HEK293 (cell line): ENCODE measurements at regions of chr1 and their contacts with region 1.

Region 1: GRCh38 chr1:207963427-207964194 is 52.7 kb upstream of the CD34 start:
- H3K4me3 ChIP-seq: peak overlapping the region; percentile 37
- H3K27ac ChIP-seq: no peak overlapping the region; the same call in 1 of the 2 replicates
- H3K4me1 ChIP-seq: no peaks in the 10 kb centered on the region
- CTCF ChIP-seq: peak; percentile 95

Region 2: DNA sequence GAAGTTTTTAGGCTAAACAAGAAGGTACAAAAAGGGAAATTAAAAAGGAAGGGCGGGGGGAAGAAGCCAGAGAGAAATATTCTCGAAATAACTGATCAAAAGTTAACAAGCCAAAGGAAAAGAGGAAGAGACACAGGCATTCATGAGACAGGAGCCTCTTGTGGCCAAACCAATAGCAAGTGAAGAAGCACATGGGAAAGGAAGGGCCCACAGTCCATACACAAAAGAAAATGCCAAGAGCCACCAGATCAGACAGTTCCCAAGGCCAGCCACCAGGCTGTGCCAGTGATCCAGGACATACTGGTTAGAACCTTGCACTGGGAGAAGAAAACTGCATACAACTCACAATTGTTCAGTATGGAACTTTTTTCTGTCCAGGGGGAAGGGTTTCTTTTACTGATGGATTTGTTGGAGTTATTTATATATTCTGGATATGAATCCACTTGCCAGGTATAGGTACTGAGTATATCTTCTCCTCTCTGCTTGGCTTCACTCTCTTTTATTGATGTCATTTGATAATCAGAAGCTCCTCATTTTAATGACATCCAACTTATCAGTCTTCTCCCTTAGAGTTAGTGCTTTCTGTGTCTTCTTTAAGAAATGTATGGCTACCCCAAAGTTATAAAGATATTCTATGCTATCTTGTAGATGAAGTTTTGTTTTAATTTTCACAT is 135.0 kb before region 1 on chr1:
- CTCF ChIA-PET with region 1: interaction called, 15 read pairs
- POLR2A ChIA-PET with region 1: no interaction called
- H3K4me3 ChIP-seq: no peak overlapping the region
- H3K27ac ChIP-seq: no peak overlapping the region
- H3K4me1 ChIP-seq: no peaks in the 10 kb centered on the region
- CTCF ChIP-seq: peak; percentile 60

Region 3: DNA sequence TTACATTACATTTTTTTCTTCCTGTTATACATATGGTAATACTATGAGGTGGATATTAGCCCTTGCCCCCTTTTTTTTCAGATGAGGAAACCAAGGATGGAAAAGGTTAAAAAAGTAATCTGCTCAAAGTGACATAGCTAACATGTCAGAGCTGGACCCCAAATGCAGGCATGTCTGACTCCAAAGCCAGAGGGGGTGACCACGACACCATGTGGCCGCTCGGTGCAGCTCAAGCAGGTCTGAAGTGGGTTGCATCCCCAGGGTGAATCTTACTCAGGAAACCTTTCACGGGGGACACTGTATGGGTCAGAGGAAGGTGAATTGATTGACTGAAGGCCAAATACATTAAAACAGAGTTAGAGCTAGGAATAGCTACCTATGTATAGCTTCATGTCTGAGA is 87.5 kb before region 1 on chr1:
- CTCF ChIA-PET with region 1: interaction called, 12 read pairs
- POLR2A ChIA-PET with region 1: interaction called, 3 read pairs
- H3K4me3 ChIP-seq: no peak overlapping the region
- H3K27ac ChIP-seq: no peak overlapping the region
- H3K4me1 ChIP-seq: no peaks in the 10 kb centered on the region
- CTCF ChIP-seq: no peak

Region 4: DNA sequence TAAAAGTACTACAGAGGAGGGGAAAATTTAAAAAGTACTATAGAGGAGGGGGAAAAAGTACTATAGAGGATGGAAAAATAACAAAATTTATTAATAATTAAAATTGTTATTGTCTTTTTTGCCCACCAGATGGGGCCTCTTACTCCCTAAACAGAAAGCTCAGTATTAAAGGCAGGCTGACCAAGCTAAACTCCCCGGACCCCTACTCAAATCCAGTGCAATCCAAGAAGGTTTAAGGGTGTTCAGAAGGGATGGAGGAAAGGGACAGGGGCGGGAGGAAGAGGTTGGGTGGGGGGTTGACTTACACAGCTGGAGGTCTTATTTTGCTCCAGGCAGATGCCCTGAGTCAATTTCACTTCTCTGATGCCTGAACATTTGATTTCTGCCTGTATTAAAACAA is 66.4 kb before region 1 on chr1:
- CTCF ChIA-PET with region 1: interaction called, 36 read pairs
- POLR2A ChIA-PET with region 1: interaction called, 7 read pairs
- H3K4me3 ChIP-seq: no peak overlapping the region
- H3K27ac ChIP-seq: no peak overlapping the region
- H3K4me1 ChIP-seq: no peaks in the 10 kb centered on the region
- CTCF ChIP-seq: no peak

Region 5: DNA sequence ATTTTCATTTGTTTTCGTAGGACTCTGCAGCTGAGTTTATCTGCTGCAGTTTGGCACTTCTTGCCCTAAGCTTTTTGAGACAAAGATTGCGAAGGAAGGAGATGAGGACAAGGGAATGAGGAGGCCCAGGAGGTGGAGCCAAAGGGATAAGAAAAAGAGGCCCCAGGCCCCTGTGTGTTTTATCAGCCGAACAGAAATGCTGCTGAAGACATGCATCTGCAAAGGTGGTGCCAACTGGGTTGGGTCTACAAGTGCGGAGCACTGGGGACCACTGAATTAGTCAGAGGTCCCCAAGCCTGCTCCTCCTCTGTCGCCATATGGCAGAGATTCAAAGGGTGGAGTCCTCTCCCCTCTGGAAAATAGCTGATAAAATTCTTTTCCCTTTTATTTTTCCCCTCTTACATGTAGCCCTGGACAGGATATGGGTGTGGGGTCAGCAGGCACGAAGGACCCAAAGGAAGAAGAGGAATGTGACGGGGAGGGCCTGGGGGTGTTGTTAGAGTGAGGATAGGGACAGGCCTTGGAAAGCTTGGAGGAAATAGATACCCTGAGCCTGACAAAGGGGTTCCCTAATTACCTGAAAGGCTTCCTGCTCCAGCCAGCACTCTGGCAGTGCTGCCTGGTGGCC is 55.4 kb before region 1 on chr1:
- CTCF ChIA-PET with region 1: interaction called, 12 read pairs
- POLR2A ChIA-PET with region 1: no interaction called
- H3K4me3 ChIP-seq: no peak overlapping the region
- H3K27ac ChIP-seq: no peak overlapping the region
- H3K4me1 ChIP-seq: no peaks in the 10 kb centered on the region
- CTCF ChIP-seq: no peak

Region 6: DNA sequence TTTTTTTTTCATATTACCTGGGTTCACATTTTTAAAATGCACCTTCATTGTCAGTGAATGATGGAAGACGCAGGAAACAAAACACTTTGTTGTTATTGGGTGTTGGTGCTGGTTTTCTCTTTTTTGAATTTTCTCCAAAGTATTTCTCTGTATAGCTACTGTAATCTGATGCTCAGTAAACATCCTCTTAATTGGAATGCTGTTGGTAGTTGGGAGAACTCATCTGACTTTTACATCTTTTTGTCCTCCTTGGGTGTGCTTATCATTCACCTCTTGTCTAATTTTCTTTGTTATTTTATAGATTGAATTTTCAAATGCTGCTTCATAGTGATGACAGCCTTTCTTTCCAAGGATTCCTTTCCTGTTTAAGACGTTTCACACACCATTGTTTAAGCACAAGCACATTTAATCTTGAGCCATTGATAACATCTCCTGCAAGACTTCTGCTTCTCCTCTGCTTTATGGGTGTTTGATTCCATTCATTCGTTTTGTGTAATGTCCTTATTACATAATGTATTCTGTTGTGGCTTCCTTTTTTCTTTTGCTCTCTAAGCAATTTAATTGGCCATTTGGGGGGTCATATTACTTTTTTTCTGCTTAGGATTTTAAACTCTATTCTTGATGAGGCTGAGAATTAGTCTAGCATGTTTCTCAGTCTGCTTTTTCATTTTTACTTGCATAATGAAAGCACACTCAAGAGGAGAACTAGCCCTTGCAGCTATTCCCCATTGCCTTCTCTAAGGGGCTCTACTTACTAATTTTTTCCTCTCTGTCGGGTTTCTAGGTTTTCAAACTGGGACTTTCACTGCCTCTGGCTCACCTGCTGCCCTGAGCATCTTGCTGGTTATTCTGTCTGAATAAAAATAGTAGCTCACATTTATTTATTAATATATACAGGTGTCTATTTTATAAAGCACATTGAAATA is 10.7 kb before region 1 on chr1:
- CTCF ChIA-PET with region 1: interaction called, 36 read pairs
- POLR2A ChIA-PET with region 1: no interaction called
- H3K4me3 ChIP-seq: no peak overlapping the region
- H3K27ac ChIP-seq: no peak overlapping the region
- H3K4me1 ChIP-seq: peaks cover 3% of the 10 kb centered on the region; the same call in 1 of the 2 replicates
- CTCF ChIP-seq: no peak

Region 7: GRCh38 chr1:208107425-208108212 is 144.0 kb after region 1 on chr1:
- CTCF ChIA-PET with region 1: no interaction called
- POLR2A ChIA-PET with region 1: no interaction called
- H3K4me3 ChIP-seq: no peak overlapping the region
- H3K27ac ChIP-seq: no peak overlapping the region
- H3K4me1 ChIP-seq: no peaks in the 10 kb centered on the region
- CTCF ChIP-seq: no peak

Region 8: DNA sequence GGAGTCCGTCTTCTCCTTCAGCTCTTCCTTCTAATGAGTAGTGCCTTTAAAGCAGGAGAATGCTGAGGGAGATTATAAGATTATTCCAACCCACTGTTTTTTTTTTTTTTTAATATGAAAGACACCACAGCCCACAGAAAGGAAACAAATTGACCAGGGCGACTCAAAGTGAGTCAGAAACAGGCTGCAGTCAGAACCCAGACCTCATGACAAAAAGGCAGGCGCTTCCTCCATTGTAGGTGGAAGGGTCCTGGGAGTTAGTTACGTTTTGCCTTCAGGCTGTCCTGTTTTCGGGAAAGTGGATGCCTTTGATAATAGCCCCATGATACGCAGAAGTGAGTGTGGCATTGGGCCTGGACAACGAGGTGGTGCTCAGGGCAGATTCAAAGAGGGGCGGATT is 259.5 kb after region 1 on chr1:
- CTCF ChIA-PET with region 1: no interaction called
- POLR2A ChIA-PET with region 1: no interaction called
- H3K4me3 ChIP-seq: no peak overlapping the region
- H3K27ac ChIP-seq: no peak overlapping the region
- H3K4me1 ChIP-seq: peaks cover 14% of the 10 kb centered on the region
- CTCF ChIP-seq: no peak

Region 9: GRCh38 chr1:208291923-208292711 is 328.5 kb after region 1 on chr1:
- CTCF ChIA-PET with region 1: no interaction called
- POLR2A ChIA-PET with region 1: no interaction called
- H3K4me3 ChIP-seq: no peak overlapping the region
- H3K27ac ChIP-seq: no peak overlapping the region
- H3K4me1 ChIP-seq: no peaks in the 10 kb centered on the region
- CTCF ChIP-seq: no peak